PC-9 (cell line): ENCODE measurements at regions of chr6 and their contacts with region 1.

Region 1: GRCh38 chr6:96889146-96889545 is 8.5 kb downstream of the NDUFAF4 start:
- DNase-seq: no peak
- H3K4me3 ChIP-seq: no peak overlapping the region
- H3K27ac ChIP-seq: no peak overlapping the region
- H3K4me1 ChIP-seq: no peaks in the 10 kb centered on the region
- H3K27me3 ChIP-seq: no peaks in the 10 kb centered on the region
- CTCF ChIP-seq: no peak

Region 2: DNA sequence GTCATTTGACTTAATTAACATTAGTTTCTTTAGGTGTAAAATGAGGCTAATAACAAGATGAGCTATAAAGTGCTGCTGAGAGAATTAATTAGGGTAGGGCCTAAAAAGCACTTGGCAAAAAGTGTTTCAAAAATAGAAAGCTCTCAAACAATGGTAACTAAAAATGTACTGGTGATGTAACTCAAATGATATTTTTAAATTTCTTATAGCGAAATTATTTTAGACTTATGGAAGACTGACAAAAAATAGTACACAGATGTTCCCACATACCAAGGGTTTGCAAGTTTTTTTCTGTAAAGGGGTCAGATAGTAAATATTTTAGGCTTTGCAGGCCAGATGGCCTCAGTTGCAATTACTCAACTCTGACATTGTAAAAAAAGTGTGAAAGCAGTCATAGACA is 558.3 kb before region 1 on chr6:
- CTCF ChIA-PET with region 1: no interaction called
- POLR2A ChIA-PET with region 1: interaction called, 10 read pairs
- intact Hi-C with region 1: no loop called
- DNase-seq: no peak
- H3K4me3 ChIP-seq: no peak overlapping the region
- H3K27ac ChIP-seq: no peak overlapping the region
- H3K4me1 ChIP-seq: no peaks in the 10 kb centered on the region
- H3K27me3 ChIP-seq: no peaks in the 10 kb centered on the region
- CTCF ChIP-seq: no peak

Region 3: DNA sequence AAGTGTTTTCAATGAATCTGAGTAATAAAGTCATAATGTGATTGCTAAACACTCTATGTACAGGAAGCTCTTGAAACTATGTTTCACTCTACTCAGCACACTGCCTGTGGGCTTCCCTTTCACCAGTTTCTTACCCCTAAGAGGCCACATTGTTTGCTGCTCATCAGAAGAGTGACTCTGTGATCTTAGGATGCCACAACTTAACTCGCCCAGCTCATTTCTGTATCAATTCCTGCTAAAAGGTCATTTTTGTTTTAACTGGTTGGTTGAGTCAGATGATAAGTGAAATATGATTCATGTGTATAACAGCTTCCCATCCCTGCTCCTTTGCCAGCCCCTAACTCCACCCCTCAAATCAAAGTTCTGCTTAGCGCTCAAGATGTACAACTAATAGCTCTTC is 18.4 kb after region 1 on chr6:
- CTCF ChIA-PET with region 1: no interaction called
- POLR2A ChIA-PET with region 1: interaction called, 13 read pairs
- intact Hi-C with region 1: no loop called
- DNase-seq: peak in 1 of 2 experiments; percentile 55
- H3K4me3 ChIP-seq: no peak overlapping the region
- H3K27ac ChIP-seq: no peak overlapping the region
- H3K4me1 ChIP-seq: peaks cover 13% of the 10 kb centered on the region
- H3K27me3 ChIP-seq: no peaks in the 10 kb centered on the region
- CTCF ChIP-seq: no peak